MCF 10A (cell line): ENCODE measurements at regions of chr9 and their contacts with region 1.

Region 1: DNA sequence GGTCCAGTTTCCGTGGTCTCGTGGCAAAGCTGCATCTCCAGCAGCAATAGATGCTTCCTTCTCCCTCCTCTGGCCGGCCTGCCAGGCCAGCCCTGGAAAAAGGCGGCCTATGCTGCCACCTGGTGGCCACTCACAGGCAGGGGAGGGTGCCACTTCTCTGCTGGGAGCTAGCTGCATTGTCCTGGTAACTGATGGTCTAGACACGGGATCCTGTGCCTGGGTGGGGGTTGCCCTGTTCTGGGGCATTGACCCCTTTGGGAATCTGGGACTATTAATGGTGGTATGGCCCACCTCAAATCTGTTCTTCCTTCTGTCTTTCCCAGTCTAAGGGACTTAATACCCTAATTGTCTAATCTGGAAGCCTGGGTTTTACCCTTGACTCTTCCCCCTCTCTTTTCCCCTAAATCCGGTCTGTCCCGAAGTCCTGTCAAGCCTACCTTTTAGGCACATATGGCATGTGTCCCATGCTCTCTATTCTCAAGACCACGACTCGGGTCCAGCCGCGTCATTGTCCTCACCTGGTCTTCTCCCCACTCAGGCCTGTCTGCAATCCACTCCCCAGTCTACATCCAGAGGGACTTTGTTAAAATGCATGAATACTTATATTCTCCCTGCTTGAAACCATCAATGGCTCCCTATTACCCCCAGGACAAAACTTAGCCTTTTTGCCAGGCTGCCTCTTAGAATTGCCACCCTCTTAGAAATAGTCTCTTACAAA is 20.0 kb upstream of the PTGS1 start:
- DNase-seq: peak; percentile 77
- H3K4me3 Mint-ChIP-seq: no peak overlapping the region
- H3K27ac Mint-ChIP-seq: no peak overlapping the region
- H3K4me1 Mint-ChIP-seq: no peaks in the 10 kb centered on the region
- H3K27me3 Mint-ChIP-seq: no peaks in the 10 kb centered on the region
- CTCF ChIP-seq: peak; percentile 89

Region 2: GRCh38 chr9:122092611-122093506 is 257.9 kb before region 1 on chr9 and contains the start of gene TTLL11:
- CTCF ChIA-PET with region 1: interaction called, 164 read pairs
- POLR2A ChIA-PET with region 1: no interaction called
- intact Hi-C with region 1: no loop called
- DNase-seq: peak; percentile 95
- H3K4me3 Mint-ChIP-seq: peak within 1 kb of the TSS; percentile 91
- H3K27ac Mint-ChIP-seq: peak within 1 kb of the TSS; percentile 57
- H3K4me1 Mint-ChIP-seq: peaks cover 33% of the 10 kb centered on the region
- H3K27me3 Mint-ChIP-seq: no peaks in the 10 kb centered on the region
- CTCF ChIP-seq: no peak
- total RNA-seq, gene TTLL11: 9.0 and 13.6 TPM in 2 replicates

Region 3: DNA sequence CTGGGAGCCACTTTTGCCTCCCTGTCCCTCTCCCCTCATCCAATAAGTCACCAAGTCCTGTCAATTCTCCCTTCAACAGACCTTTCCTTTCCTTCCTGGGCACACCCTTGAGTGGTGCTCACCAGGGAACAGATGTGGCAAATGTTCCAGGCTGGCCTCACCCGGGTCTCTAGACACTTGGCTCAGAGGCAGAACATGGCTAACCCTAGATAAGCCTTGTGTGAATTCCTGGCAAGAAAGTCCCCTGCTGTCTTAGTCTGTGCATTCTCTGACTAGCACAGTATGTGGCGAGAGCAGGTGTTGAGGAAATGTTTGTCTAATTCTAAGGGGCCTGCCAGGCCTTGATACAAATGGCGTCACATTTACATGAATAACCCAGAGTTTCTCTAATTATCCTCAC is 21.2 kb before region 1 on chr9:
- CTCF ChIA-PET with region 1: interaction called, 10 read pairs
- POLR2A ChIA-PET with region 1: no interaction called
- intact Hi-C with region 1: no loop called
- DNase-seq: no peak
- H3K4me3 Mint-ChIP-seq: no peak overlapping the region
- H3K27ac Mint-ChIP-seq: no peak overlapping the region
- H3K4me1 Mint-ChIP-seq: no peaks in the 10 kb centered on the region
- H3K27me3 Mint-ChIP-seq: no peaks in the 10 kb centered on the region
- CTCF ChIP-seq: no peak

Region 4: GRCh38 chr9:122364783-122365150 is 14.0 kb after region 1 on chr9:
- CTCF ChIA-PET with region 1: interaction called, 32 read pairs
- POLR2A ChIA-PET with region 1: no interaction called
- intact Hi-C with region 1: no loop called
- DNase-seq: peak; percentile 38
- H3K4me3 Mint-ChIP-seq: no peak overlapping the region
- H3K27ac Mint-ChIP-seq: no peak overlapping the region
- H3K4me1 Mint-ChIP-seq: peaks cover 15% of the 10 kb centered on the region
- H3K27me3 Mint-ChIP-seq: no peaks in the 10 kb centered on the region
- CTCF ChIP-seq: no peak

Region 5: GRCh38 chr9:122445155-122445749 is 94.5 kb after region 1 on chr9:
- CTCF ChIA-PET with region 1: interaction called, 10 read pairs
- POLR2A ChIA-PET with region 1: no interaction called
- intact Hi-C with region 1: no loop called
- DNase-seq: no peak
- H3K4me3 Mint-ChIP-seq: no peak overlapping the region
- H3K27ac Mint-ChIP-seq: no peak overlapping the region
- H3K4me1 Mint-ChIP-seq: peaks cover 13% of the 10 kb centered on the region
- H3K27me3 Mint-ChIP-seq: peaks cover 20% of the 10 kb centered on the region
- CTCF ChIP-seq: no peak

Region 6: DNA sequence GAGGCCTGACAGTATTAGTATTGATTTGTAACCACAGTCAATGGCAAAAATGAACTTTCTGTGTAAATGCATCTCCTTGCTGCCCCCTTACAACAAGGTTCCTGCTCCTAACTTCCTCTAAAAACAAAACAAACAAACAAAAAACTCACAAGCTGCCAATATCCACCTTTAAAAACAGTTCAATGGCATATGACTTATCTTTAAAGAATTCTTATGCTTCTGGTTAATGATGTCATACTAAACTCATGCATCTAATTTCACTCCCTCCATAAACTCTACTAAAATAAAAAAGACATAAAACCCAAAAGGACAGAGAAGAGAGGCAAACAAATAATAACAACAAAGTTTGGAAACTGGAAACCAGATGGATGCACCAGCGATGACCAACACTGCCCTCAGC is 185.3 kb after region 1 on chr9:
- CTCF ChIA-PET with region 1: no interaction called
- POLR2A ChIA-PET with region 1: no interaction called
- intact Hi-C with region 1: no loop called
- DNase-seq: no peak
- H3K4me3 Mint-ChIP-seq: no peak overlapping the region
- H3K27ac Mint-ChIP-seq: no peak overlapping the region
- H3K4me1 Mint-ChIP-seq: peaks cover 6% of the 10 kb centered on the region
- H3K27me3 Mint-ChIP-seq: peaks cover 28% of the 10 kb centered on the region
- CTCF ChIP-seq: no peak